Common myeloid progenitor, CD34-positive (primary cell): ENCODE measurements at regions of chr7 and their contacts with region 1.

Region 1: GRCh38 chr7:85464042-85464651 is 277.3 kb upstream of the SEMA3D start:
- DNase-seq: peak; percentile 11 to 33 (median 25)
- H3K4me3 ChIP-seq: no peak overlapping the region
- H3K27ac ChIP-seq: no peak overlapping the region
- H3K4me1 ChIP-seq: peaks cover 0 to 3% (median 0%) of the 10 kb centered on the region in 4 experiments
- H3K27me3 ChIP-seq: no peaks in the 10 kb centered on the region

Region 2: GRCh38 chr7:85336086-85336485 is 128.1 kb before region 1 on chr7:
- CTCF ChIA-PET with region 1: no interaction called
- POLR2A ChIA-PET with region 1: no interaction called
- DNase-seq: no peak
- H3K4me3 ChIP-seq: no peak overlapping the region
- H3K27ac ChIP-seq: no peak overlapping the region
- H3K4me1 ChIP-seq: no peaks in the 10 kb centered on the region
- H3K27me3 ChIP-seq: no peaks in the 10 kb centered on the region

Region 3: DNA sequence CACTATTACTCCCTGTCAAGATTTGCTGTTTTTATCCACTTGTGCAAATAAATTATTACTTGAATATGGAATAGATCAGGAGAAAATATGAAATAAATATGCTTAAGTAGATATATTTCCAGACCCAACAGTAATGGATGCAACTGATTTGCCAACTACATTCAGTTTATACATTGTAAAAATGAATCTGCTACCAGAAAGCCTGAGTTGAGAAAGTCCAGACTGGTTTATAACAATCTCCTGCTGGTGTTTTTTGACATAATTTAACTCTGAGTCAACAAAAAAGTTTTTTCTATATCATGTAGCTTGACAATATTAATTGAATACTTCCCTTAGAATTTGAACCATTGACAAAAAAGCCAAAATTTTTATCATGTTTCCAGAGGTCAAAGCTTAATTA is 11.5 kb before region 1 on chr7:
- CTCF ChIA-PET with region 1: interaction called, 17 read pairs
- POLR2A ChIA-PET with region 1: no interaction called
- DNase-seq: no peak
- H3K4me3 ChIP-seq: no peak overlapping the region
- H3K27ac ChIP-seq: no peak overlapping the region
- H3K4me1 ChIP-seq: no peaks in the 10 kb centered on the region
- H3K27me3 ChIP-seq: no peaks in the 10 kb centered on the region